HEK293T (cell line): ENCODE measurements at regions of chr11 and their contacts with region 1.

Region 1: DNA sequence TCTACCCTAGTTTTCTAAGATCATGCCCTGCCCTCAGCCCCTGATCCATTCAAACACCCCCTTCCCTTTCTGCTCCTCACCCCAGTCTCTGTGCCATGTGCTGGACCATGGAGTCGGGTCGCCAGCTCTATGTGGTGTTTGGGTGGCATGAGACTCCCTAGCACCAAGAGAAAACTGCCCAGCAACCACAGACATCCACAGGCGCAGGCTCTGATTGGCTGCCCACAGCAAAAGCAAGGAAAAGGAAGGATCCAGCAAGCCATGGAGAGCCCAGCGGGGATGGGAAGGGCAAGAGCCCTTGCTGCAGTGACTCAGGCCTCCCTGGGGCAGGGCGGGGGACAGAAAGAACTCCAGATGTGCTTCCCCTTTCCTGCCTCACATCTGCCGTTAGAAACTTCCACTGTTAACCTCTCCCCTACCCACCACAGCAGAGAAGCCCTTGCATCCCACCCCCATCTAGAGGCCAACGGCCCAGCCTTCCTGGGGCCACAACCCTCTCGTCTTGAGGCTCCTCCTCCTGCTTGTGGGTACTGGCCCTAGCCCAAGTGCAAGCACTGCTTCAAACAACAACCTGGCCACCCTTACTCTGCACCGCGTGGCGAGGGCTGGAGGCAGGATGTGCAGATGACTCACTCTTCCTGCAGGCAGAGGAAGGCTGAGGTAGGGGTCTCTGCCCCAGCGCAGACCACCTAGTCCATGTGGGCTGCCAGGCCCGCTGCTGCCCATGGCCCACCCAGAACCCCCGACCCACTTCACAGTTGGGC is 9.7 kb upstream of the AHNAK start:
- DNase-seq: peak; percentile 77

Region 2: GRCh38 chr11:62573592-62574362 is 17.5 kb after region 1 on chr11 and contains the start of gene EEF1G:
- CTCF ChIA-PET with region 1: interaction called, 7 read pairs
- POLR2A ChIA-PET with region 1: interaction called, 40 read pairs
- DNase-seq: peak; percentile 98